Activated B cell treated with CpG ODN at 0.5 μM for 24 hours (primary cell): ENCODE measurements at regions of chr15 and their contacts with region 1.

Region 1: DNA sequence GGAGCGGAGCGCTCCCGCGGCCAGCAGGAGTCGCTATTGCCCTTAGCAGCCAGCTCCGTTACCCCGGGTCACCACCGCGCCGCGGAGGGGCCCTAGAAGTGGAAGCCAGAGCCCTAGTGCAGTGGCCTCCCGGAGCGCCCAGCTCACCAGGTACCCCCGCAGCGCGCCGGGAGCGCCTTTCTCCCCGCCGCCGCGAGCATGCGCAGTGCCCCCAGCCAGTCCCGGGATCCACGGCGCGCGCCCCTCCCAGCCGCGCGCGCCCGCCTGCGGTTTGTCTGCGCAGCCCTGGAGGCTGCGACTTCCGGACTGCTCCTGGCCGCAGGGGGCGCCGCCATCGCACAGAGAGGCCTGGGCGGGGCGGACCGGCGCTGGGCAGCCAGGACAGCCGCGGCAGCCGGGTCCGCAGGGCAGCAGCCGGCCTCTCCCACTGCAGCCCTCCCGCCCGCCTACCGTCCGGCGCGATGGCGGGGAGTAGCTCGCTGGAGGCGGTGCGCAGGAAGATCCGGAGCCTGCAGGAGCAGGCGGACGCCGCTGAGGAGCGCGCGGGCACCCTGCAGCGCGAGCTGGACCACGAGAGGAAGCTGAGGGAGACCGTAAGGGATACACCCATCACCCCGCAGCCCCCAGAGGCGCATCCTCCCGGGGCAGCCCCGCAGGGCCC is 5.7 kb downstream of the TPM1 start:
- DNase-seq: peak; percentile 84
- ATAC-seq: peak; percentile 86
- H3K4me3 Mint-ChIP-seq: peak overlapping the region; percentile 92
- H3K27ac Mint-ChIP-seq: peak overlapping the region; percentile 53
- H3K4me1 Mint-ChIP-seq: peaks cover 22% of the 10 kb centered on the region
- H3K27me3 Mint-ChIP-seq: peaks cover 28% of the 10 kb centered on the region
- CTCF ChIP-seq: peak; percentile 73

Region 2: GRCh38 chr15:62403164-62403809 is 645.0 kb before region 1 on chr15:
- CTCF ChIA-PET with region 1: no interaction called
- POLR2A ChIA-PET with region 1: no interaction called
- intact Hi-C with region 1: no loop called
- DNase-seq: no peak
- ATAC-seq: no peak
- H3K4me3 Mint-ChIP-seq: no peak overlapping the region
- H3K27ac Mint-ChIP-seq: no peak overlapping the region
- H3K4me1 Mint-ChIP-seq: no peaks in the 10 kb centered on the region
- H3K27me3 Mint-ChIP-seq: peaks cover 18% of the 10 kb centered on the region
- CTCF ChIP-seq: no peak

Region 3: GRCh38 chr15:63093486-63094205 is 45.4 kb after region 1 on chr15:
- CTCF ChIA-PET with region 1: interaction called, 37 read pairs
- POLR2A ChIA-PET with region 1: no interaction called
- intact Hi-C with region 1: loop called (anchors 1 kb)
- DNase-seq: peak; percentile 30
- ATAC-seq: peak; percentile 75
- H3K4me3 Mint-ChIP-seq: no peak overlapping the region
- H3K27ac Mint-ChIP-seq: no peak overlapping the region
- H3K4me1 Mint-ChIP-seq: peaks cover 4% of the 10 kb centered on the region
- H3K27me3 Mint-ChIP-seq: no peaks in the 10 kb centered on the region
- CTCF ChIP-seq: peak; percentile 34

Region 4: DNA sequence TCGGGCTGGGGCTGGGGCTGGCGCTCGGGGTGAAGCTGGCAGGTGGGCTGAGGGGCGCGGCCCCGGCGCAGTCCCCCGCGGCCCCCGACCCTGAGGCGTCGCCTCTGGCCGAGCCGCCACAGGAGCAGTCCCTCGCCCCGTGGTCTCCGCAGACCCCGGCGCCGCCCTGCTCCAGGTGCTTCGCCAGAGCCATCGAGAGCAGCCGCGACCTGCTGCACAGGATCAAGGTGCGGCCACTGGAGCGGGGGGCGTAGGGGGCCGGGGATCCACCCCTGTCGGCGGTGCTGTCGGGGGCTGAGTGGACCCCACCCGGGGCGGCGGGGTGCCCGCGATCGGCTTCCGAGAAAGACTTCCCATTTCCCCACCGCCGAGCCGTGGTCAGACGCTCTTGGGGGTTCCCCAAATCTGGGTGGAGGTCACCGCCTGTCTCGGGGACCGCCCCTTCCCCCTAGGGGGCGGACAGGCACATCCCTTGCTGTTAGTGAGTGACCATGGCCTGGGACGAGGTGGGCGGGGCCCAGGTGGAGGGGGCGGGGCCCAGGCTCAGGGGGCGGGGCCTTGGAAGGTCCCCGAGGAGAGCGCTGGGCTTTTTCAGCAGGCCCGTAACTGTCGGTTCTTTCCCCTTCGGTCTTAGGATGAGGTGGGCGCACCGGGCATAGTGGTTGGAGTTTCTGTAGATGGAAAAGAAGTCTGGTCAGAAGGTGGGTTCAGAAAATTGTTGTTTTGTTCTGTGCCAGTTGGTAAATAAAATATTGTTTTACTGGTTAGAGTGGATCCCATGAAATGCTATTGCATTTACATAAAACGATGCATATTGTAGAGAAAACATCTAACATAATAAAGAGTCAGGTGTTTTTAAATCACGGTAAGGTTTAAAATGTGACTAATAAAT is 74.0 kb after region 1 on chr15:
- CTCF ChIA-PET with region 1: interaction called, 3 read pairs
- POLR2A ChIA-PET with region 1: no interaction called
- intact Hi-C with region 1: loop called (anchors 1 kb)
- DNase-seq: peak; percentile 77
- ATAC-seq: peak; percentile 88
- H3K4me3 Mint-ChIP-seq: peak overlapping the region; percentile 86
- H3K27ac Mint-ChIP-seq: peak overlapping the region; percentile 86
- H3K4me1 Mint-ChIP-seq: peaks cover 15% of the 10 kb centered on the region
- H3K27me3 Mint-ChIP-seq: no peaks in the 10 kb centered on the region
- CTCF ChIP-seq: no peak

Region 5: GRCh38 chr15:63277038-63277892 is 229.0 kb after region 1 on chr15 and contains the start of gene APH1B:
- CTCF ChIA-PET with region 1: interaction called, 3 read pairs
- POLR2A ChIA-PET with region 1: no interaction called
- intact Hi-C with region 1: loop called (anchors 2 kb)
- DNase-seq: peak; percentile 82
- ATAC-seq: peak; percentile 96
- H3K4me3 Mint-ChIP-seq: peak within 1 kb of the TSS; percentile 90
- H3K27ac Mint-ChIP-seq: peak within 1 kb of the TSS; percentile 89
- H3K4me1 Mint-ChIP-seq: peaks cover 21% of the 10 kb centered on the region
- H3K27me3 Mint-ChIP-seq: no peaks in the 10 kb centered on the region
- CTCF ChIP-seq: no peak
- total RNA-seq, gene APH1B: 22.1 and 23.7 TPM in 2 replicates

Region 6: DNA sequence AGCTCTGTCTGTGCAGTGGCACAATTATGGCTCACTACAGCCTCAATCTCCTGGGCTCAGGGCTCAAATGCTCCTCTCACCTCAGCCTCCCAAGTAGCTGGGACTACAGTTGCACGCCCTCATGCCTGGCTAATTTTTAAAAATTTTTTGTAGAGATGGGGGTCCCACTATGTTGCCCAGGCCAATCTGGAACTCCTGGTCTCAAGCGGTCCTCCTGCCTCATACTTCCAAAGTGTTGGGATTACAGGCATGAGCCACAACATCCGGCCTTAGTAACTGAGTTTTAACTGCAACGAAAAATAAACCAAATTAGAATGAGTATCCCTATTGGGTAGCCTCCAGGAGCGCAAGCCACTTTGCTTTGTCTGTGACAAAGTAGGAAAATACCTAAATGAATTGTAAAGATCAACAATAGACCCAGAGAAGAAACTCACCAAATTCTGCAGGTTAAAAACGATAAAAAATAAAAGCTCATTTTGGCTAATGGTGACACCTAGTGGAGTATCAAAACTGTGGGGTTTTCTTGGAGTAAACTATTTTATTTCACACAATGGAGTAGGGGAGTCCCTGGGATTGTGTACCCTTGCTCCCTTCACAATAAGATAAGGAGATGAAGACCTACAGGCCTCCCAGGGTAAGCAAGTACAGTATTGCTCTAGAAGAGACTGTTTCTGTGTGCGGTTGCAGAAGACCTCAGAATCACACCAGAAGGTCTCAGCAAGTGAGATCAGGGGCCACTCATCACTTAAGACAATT is 354.4 kb after region 1 on chr15:
- CTCF ChIA-PET with region 1: interaction called, 18 read pairs
- POLR2A ChIA-PET with region 1: no interaction called
- intact Hi-C with region 1: loop called (anchors 1 kb)
- DNase-seq: no peak
- ATAC-seq: peak; percentile 34
- H3K4me3 Mint-ChIP-seq: no peak overlapping the region
- H3K27ac Mint-ChIP-seq: no peak overlapping the region
- H3K4me1 Mint-ChIP-seq: peaks cover 8% of the 10 kb centered on the region
- H3K27me3 Mint-ChIP-seq: no peaks in the 10 kb centered on the region
- CTCF ChIP-seq: no peak